Activated CD4-positive, alpha-beta memory T cell treated with anti-CD3 and anti-CD28 coated beads, Interleukin-2, amount 10 ng/mL, durations not matched to agents 7 days and 5 days (primary cell): ENCODE measurements at regions of chrX and their contacts with region 1.

Region 1: DNA sequence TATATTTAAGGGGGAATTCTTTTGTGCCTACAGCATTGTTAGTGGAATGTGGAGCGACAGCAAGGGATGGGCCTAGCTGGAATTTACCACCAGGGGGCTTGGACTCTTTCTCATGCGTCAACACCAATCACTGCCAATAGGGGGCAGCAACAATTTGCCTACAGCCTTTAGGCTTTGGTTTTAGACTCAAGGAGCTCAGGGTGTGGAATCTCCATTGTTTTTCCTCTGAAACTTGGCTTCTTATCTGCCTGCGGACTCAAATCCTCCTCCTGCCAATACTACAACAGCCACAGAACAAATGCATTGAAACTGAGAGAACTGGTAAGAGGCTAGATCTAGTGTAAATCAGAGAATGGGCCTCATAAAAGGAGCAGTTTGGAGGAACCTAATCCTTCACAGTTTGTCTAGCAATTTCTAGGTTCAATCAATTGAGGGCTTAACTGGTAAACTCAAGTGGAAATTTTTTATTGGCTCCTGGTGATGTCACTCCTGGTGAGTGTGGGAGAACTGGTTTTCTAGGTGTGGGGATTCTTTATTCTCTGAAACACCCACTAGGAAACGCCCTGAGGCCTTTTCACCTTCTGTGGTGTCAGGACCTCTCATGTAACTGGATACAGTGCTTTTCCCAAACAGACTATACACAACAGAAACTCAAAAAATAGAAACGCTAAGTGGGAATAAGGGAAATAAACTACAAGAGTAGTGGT is 27.9 kb upstream of the TMSB4X start:
- DNase-seq: peak; percentile 78
- H3K4me3 Mint-ChIP-seq: peak overlapping the region; percentile 45
- H3K27ac Mint-ChIP-seq: peak overlapping the region; percentile 85
- H3K4me1 Mint-ChIP-seq: peaks cover 57% of the 10 kb centered on the region
- H3K27me3 Mint-ChIP-seq: no peaks in the 10 kb centered on the region

Region 2: GRCh38 chrX:12548746-12549145 is 398.2 kb before region 1 on chrX:
- CTCF ChIA-PET with region 1: no interaction called
- POLR2A ChIA-PET with region 1: no interaction called
- DNase-seq: no peak
- H3K4me3 Mint-ChIP-seq: no peak overlapping the region
- H3K27ac Mint-ChIP-seq: no peak overlapping the region
- H3K4me1 Mint-ChIP-seq: no peaks in the 10 kb centered on the region
- H3K27me3 Mint-ChIP-seq: no peaks in the 10 kb centered on the region

Region 3: GRCh38 chrX:12779534-12779933 is 167.5 kb before region 1 on chrX:
- CTCF ChIA-PET with region 1: no interaction called
- POLR2A ChIA-PET with region 1: no interaction called
- DNase-seq: no peak
- H3K4me3 Mint-ChIP-seq: no peak overlapping the region
- H3K27ac Mint-ChIP-seq: no peak overlapping the region
- H3K4me1 Mint-ChIP-seq: no peaks in the 10 kb centered on the region
- H3K27me3 Mint-ChIP-seq: peaks cover 5% of the 10 kb centered on the region

Region 4: GRCh38 chrX:13000301-13000811 is 53.4 kb after region 1 on chrX:
- CTCF ChIA-PET with region 1: interaction called, 8 read pairs
- POLR2A ChIA-PET with region 1: interaction called, 46 read pairs
- DNase-seq: peak; percentile 42
- H3K4me3 Mint-ChIP-seq: peak overlapping the region; percentile 73
- H3K27ac Mint-ChIP-seq: peak overlapping the region; percentile 94
- H3K4me1 Mint-ChIP-seq: peaks cover 78% of the 10 kb centered on the region
- H3K27me3 Mint-ChIP-seq: no peaks in the 10 kb centered on the region

Region 5: GRCh38 chrX:13066391-13066790 is 119.4 kb after region 1 on chrX:
- CTCF ChIA-PET with region 1: no interaction called
- POLR2A ChIA-PET with region 1: no interaction called
- DNase-seq: no peak
- H3K4me3 Mint-ChIP-seq: no peak overlapping the region
- H3K27ac Mint-ChIP-seq: no peak overlapping the region
- H3K4me1 Mint-ChIP-seq: peaks cover 4% of the 10 kb centered on the region
- H3K27me3 Mint-ChIP-seq: no peaks in the 10 kb centered on the region

Region 6: GRCh38 chrX:13078739-13079444 is 131.9 kb after region 1 on chrX:
- CTCF ChIA-PET with region 1: interaction called, 273 read pairs
- POLR2A ChIA-PET with region 1: interaction called, 17 read pairs
- DNase-seq: no peak
- H3K4me3 Mint-ChIP-seq: peak overlapping the region; percentile 61
- H3K27ac Mint-ChIP-seq: peak overlapping the region; percentile 78
- H3K4me1 Mint-ChIP-seq: peaks cover 90% of the 10 kb centered on the region
- H3K27me3 Mint-ChIP-seq: no peaks in the 10 kb centered on the region

Region 7: DNA sequence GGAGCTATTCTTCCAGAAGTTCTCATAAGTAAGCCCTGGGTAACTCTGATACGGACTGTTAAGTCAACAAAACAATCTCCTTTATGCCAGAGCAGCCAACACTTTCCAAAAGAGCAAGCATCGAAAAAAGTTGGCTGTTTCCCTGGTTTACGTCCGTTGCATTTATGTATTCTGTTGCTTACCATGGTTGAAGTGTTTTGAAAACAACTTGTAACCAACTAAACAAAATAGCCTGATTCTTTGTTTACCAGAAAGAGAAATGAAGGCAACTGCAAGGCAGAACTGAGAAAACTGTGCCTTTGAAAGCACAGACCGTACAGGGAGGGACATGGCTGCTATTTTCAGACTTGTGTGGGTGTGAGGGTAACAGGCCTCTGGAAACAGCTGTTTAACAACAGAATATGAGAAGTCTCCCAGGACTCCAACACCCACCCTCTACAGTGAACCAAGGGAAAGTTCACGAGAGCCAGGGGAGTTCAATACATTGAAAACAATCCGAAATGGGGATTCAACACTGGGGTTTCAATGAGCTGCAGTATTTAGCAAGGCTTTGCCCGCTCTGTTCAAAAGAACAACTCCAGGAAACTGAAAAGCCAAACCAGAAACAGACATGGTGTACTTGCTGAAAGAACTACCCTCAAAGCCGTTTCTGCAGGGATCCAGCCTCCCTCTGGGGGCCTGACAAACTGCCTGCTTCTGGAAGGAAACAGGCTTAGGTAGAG is 526.6 kb after region 1 on chrX:
- CTCF ChIA-PET with region 1: interaction called, 10 read pairs
- POLR2A ChIA-PET with region 1: no interaction called
- DNase-seq: no peak
- H3K4me3 Mint-ChIP-seq: peak overlapping the region; percentile 33
- H3K27ac Mint-ChIP-seq: peak overlapping the region; percentile 74
- H3K4me1 Mint-ChIP-seq: peaks cover 31% of the 10 kb centered on the region
- H3K27me3 Mint-ChIP-seq: no peaks in the 10 kb centered on the region